Left lung (tissue), 14 donors: ENCODE measurements at regions of chr16 and their contacts with region 1.

Region 1: GRCh38 chr16:58487566-58488351 is 12.2 kb upstream of the NDRG4 start:
- DNase-seq: peak; percentile 72 to 95 (median 83)
- ATAC-seq: peak; percentile 98
- H3K4me3 ChIP-seq: no peak overlapping the region
- H3K27ac ChIP-seq: no peak overlapping the region
- H3K4me1 ChIP-seq: peaks cover 3 to 8% of the 10 kb centered on the region in 2 donors
- H3K27me3 ChIP-seq: no peaks in the 10 kb centered on the region
- CTCF ChIP-seq: peak; percentile 92 to 93

Region 2: DNA sequence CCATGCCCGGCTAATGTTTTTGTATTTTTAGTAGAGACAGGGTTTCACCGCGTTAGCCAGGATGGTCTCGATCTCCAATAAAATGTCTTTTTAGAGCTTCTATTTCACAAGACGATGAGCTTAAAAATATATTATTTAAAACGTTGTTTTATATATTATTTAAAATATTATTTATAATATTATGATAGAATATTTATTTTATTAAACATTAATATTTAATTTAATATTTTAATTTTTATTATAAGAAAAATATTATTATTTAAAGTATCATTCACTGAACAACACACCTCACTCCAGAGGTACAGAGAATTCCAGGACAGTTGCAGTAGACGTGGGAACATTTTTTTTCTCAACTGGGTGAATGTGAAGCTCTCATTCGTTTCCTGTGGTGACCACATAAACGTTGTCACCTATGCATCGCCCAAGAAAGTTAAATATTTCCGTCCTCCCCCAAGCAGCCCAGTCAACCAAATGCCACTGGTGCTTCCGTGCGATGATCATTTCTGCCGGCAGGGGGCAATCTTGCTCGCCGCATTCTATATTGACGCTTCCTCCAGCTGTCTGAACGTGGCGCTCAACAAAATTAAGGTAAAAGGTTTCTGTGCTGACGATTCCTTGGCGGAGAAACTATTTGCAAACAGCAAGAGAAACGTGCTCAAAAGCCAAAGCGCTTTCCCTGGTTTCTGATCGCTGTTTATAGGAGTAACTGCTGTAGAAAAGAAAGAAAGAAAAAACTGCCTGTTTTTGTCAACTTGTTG is 151.2 kb before region 1 on chr16:
- intact Hi-C with region 1: loop called in 1 of 2 experiments (anchors 5 kb)
- DNase-seq: peak; percentile 67 to 89 (median 76)
- ATAC-seq: peak; percentile 92
- H3K4me3 ChIP-seq: no peak overlapping the region
- H3K27ac ChIP-seq: no peak overlapping the region
- H3K4me1 ChIP-seq: peaks cover 0 to 6% of the 10 kb centered on the region in 2 donors
- H3K27me3 ChIP-seq: no peaks in the 10 kb centered on the region
- CTCF ChIP-seq: peak; percentile 90